ENCODE measurements at regions of chr4 and their contacts with region 1.

Region 1: DNA sequence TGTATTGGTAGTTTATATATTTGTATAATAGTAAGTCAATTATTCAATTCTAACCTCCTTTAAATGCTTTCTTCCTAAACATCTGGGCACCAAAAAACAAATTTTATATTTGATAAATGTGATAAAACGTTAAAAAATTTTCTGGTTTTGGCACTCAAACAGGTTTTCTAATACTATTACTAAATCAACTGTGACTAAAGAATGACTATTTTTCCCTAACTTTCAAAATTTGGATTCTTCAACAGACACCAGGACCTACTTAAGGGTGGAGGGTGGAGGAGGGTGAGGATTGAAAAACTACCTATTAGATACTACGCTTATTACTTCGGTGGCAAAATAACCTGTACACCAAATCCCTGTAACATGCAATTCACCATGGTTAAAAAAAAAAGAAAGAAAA is 555.5 kb downstream of the IL15 start:
- DNase-seq: no peak
- H3K4me3 ChIP-seq: no peak overlapping the region
- H3K27ac ChIP-seq: no peak overlapping the region
- H3K27me3 ChIP-seq: no peaks in the 10 kb centered on the region
- CTCF ChIP-seq: no peak

Region 2: DNA sequence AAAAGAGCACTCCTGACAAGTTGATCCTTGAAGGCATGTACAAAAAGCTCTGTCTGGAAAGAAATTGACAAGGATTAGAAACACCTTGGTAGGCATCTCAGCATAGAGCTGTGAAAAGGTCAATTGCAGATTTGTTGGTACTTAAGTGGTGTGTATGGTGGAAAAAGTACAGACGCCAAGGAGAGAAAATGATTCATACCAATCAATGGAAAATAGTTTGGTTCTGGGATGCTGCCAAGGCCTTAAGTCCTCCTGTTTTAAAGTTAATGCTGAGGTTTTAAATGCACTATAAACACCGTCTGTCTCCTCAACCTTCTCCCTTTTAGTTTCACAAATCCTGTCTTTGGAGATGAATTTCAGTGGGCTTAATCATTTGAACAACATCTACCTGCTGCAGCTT is 31.4 kb before region 1 on chr4:
- CTCF ChIA-PET with region 1: no interaction called
- POLR2A ChIA-PET with region 1: no interaction called
- DNase-seq: no peak
- H3K4me3 ChIP-seq: no peak overlapping the region
- H3K27ac ChIP-seq: no peak overlapping the region
- H3K27me3 ChIP-seq: no peaks in the 10 kb centered on the region
- CTCF ChIP-seq: no peak

Region 3: DNA sequence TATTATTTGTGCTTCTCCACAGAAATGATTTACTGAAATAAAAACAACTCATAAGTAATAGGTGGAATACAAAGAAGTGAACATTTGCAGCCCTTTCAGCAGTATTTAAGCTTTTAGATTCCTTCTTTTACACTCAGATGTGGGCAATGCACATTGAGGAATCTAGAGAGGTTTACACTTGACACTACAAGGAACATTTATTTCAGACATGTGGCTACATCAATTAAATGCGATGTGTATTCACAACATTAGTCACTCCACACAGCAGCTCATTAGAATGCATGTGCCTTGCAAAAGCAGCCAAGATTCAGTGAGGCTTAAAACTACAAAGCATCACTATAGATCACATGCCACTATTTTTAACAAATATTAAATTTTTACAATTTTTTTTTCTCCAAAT is 173.5 kb after region 1 on chr4:
- CTCF ChIA-PET with region 1: no interaction called
- POLR2A ChIA-PET with region 1: interaction called, 11 read pairs
- DNase-seq: no peak
- H3K4me3 ChIP-seq: no peak overlapping the region
- H3K27ac ChIP-seq: no peak overlapping the region
- H3K27me3 ChIP-seq: no peaks in the 10 kb centered on the region
- CTCF ChIP-seq: no peak